GM13977 (cell line): ENCODE measurements at regions of chr16 and their contacts with region 1.

Region 1: DNA sequence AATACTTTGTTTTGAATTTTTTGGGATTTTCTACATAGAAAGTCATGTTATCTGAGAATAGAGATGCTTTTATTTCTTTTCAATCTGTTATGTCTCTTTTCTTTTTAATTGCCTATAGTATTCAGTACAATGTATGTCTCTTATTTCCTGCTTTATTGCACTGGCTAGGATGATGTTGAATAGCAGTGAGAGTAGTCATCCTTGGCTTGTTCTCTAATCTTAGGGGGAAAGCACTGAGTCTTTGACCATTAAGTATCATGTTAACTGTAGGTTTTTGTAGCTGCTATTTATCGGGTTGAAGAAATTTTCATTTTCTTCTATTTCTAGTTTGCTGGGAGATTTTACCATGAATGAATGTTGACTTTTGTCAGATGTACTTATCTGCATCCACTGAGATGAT is 10.0 kb upstream of the ABCA3 start:
- DNase-seq: no peak
- CTCF ChIP-seq: no peak

Region 2: GRCh38 chr16:2267913-2268666 is 82.4 kb before region 1 on chr16 and contains the start of gene RNPS1:
- in situ Hi-C with region 1: no loop called
- DNase-seq: peak; percentile 100
- CTCF ChIP-seq: no peak

Region 3: GRCh38 chr16:2429034-2429770 is 78.7 kb after region 1 on chr16 and contains the start of gene CCNF:
- in situ Hi-C with region 1: loop called (anchors 10 kb)
- DNase-seq: peak; percentile 100
- CTCF ChIP-seq: peak; percentile 4

Region 4: GRCh38 chr16:2486645-2487516 is 136.4 kb after region 1 on chr16:
- in situ Hi-C with region 1: loop called (anchors 10 kb)
- DNase-seq: peak; percentile 90
- CTCF ChIP-seq: peak; percentile 62